BJ (cell line): ENCODE measurements at regions of chr22 and their contacts with region 1.

Region 1: GRCh38 chr22:50674606-50675549 is 2.3 kb downstream of the SHANK3 start:
- DNase-seq: no peak
- H3K4me3 ChIP-seq: no peak overlapping the region
- H3K27me3 ChIP-seq: peaks cover 25% of the 10 kb centered on the region
- CTCF ChIP-seq: no peak

Region 2: DNA sequence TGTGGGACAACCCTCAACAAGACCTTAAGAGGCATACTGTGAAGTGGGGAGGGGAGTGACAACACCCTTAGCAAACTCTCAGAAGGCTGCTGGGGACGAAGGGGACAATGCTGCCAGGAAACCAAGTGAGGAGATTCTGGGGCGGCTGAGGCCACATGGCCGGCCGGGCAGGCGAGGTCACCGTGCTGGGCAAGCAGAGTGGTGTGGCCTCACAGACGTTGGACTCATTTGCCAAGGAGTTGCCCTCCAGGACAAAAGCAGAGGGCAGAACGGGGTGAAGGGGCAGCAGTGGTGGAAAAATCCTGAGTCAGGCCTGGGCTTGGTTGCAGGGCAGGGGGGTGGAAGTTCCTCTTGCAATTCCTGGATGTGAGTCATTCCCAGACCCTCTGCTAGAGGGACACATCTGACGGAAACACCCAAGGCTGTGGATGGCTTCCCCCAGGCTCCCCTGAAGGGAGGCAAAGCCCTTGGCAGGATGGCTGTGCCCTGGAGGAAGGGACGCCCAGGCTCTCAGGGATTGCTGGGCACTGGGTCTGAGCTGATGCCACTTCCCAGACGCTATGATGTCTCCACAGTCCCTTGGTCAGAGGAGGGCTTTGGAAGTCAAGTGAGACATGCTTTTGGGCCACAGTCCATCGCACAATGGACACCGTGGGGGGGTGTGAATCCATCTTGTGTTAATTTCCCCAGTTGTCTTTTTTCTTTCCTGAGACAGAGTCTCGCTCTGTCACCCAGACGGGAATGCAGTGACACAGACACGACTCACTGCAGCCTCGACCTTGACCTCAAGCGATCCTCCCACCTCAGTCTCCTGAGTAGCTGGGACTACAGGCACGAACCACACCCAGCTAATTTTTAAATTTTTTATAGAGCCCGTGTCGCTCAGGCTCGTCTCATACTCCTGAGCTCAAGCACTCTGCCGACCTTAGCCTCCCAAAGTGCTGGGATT is 18.5 kb before region 1 on chr22:
- CTCF ChIA-PET with region 1: no interaction called
- POLR2A ChIA-PET with region 1: interaction called, 16 read pairs
- DNase-seq: no peak
- H3K4me3 ChIP-seq: no peak overlapping the region
- H3K27me3 ChIP-seq: no peaks in the 10 kb centered on the region
- CTCF ChIP-seq: no peak